Activated B cell treated with CpG ODN at 0.5 μM for 24 hours (primary cell): ENCODE measurements at regions of chr15 and their contacts with region 1.

Region 1: DNA sequence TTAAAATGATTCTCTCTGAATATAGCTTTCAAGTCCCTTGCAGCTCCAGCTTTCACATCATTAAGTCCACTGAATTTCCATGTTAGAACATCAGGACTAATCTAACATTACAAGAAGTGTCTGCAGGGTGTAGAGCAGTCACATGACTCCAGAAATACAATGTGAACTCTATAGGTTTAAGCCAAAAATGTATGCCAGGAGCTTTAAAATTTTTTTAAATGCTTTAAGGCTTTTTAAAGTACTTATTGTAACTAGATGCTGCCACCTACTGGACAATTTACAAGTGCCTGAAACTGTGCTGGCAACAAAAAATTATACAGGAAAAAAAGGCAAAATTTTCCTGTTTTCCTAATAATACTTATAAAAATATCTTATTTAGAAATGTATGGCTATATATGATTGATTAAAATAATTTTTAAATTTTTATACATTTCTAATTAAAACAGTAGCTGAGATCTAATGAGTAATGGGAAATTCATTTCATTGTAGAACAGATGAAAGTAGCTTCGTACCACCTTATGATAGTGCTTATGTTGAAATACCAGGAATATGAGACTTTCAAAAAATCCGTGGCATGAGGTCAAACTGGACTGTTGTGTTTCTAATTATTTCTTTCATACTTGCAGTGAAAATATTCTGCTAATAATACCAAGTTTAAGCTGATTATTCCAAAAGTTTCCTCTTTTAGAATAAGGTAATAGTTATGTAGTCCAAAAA is 25.7 kb downstream of the FSIP1 start:
- DNase-seq: no peak
- ATAC-seq: no peak
- H3K4me3 Mint-ChIP-seq: no peak overlapping the region
- H3K27ac Mint-ChIP-seq: no peak overlapping the region
- H3K4me1 Mint-ChIP-seq: no peaks in the 10 kb centered on the region
- H3K27me3 Mint-ChIP-seq: peaks cover 5% of the 10 kb centered on the region
- CTCF ChIP-seq: peak; percentile 92

Region 2: DNA sequence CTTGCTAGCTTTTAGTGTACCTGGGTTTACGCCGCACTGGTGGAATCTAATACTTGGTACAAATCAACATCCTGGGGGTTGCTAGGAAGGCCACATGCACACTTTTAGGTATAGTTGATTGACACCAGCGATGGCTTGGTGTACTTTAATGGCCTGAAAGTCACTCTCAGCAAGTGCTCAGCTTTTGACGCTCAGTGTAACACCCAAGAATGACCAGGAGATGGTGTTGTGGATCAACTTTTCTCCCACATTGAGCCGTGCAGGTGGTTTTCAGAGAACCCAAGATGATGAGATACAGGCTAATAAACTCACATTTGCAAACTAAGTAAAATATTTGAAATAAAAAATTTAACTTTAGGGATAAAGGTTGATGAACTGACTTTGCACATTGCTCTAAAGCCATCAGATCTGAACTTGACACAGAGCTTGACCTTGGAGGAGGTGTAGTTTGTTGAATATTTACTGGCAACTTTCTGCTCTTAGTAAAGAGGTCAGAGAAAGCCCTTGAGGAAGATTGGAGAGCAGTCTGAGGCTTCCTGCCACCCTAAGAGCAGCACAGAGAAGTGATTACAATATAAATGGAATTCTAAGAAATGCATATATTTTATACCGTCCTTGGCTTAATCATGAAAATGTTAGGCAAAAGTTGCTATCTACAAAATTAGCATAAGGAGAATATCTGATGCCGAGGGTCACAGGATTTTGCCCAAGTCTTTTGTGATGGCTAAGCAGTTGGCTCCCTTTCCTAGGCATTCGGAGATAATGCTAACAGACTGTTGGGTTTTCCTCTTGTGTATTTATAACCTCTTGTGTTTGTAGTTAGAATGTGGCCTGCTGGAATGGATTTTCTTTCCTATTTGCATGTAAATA is 1048.9 kb before region 1 on chr15:
- CTCF ChIA-PET with region 1: interaction called, 10 read pairs
- POLR2A ChIA-PET with region 1: no interaction called
- intact Hi-C with region 1: loop called (anchors 1 kb)
- DNase-seq: no peak
- ATAC-seq: peak; percentile 65
- H3K4me3 Mint-ChIP-seq: no peak overlapping the region
- H3K27ac Mint-ChIP-seq: no peak overlapping the region
- H3K4me1 Mint-ChIP-seq: no peaks in the 10 kb centered on the region
- H3K27me3 Mint-ChIP-seq: peaks cover 14% of the 10 kb centered on the region
- CTCF ChIP-seq: no peak

Region 3: GRCh38 chr15:39624806-39625205 is 132.2 kb before region 1 on chr15:
- CTCF ChIA-PET with region 1: no interaction called
- POLR2A ChIA-PET with region 1: no interaction called
- intact Hi-C with region 1: no loop called
- DNase-seq: no peak
- ATAC-seq: no peak
- H3K4me3 Mint-ChIP-seq: no peak overlapping the region
- H3K27ac Mint-ChIP-seq: no peak overlapping the region
- H3K4me1 Mint-ChIP-seq: peaks cover 4% of the 10 kb centered on the region
- H3K27me3 Mint-ChIP-seq: peaks cover 4% of the 10 kb centered on the region
- CTCF ChIP-seq: no peak

Region 4: DNA sequence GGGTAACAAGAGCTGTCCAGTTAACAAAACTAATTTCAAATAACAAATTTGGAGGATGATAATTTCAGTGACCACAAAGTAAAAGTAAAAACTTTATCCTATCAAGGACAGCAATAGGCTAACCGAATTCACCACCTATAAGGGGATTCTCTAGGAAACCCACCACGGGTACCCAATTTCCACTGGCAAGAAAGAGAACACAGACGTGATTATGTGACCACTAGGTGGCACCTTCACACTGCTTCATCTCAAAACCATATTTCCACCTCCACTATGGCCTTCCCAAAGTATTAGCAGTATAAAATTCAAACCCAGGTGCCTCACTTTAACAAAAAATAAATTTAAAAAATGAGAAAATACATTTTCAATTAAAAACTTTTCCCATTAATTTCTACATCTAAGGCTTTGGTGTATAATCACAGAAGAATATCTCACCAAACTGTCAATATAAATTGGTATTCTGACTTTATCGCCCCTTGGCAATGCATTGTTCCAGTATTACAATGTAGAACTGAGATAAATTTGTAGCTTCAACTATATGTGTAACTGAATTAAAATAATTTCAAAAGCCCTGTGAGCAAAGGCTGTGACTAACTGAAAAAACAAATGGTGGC is 70.9 kb before region 1 on chr15:
- CTCF ChIA-PET with region 1: interaction called, 55 read pairs
- POLR2A ChIA-PET with region 1: no interaction called
- intact Hi-C with region 1: loop called (anchors 1 kb)
- DNase-seq: no peak
- ATAC-seq: no peak
- H3K4me3 Mint-ChIP-seq: no peak overlapping the region
- H3K27ac Mint-ChIP-seq: no peak overlapping the region
- H3K4me1 Mint-ChIP-seq: no peaks in the 10 kb centered on the region
- H3K27me3 Mint-ChIP-seq: no peaks in the 10 kb centered on the region
- CTCF ChIP-seq: no peak

Region 5: GRCh38 chr15:39770748-39771689 is 14.1 kb after region 1 on chr15:
- CTCF ChIA-PET with region 1: interaction called, 13 read pairs
- POLR2A ChIA-PET with region 1: no interaction called
- intact Hi-C with region 1: no loop called
- DNase-seq: no peak
- ATAC-seq: no peak
- H3K4me3 Mint-ChIP-seq: no peak overlapping the region
- H3K27ac Mint-ChIP-seq: no peak overlapping the region
- H3K4me1 Mint-ChIP-seq: peaks cover 9% of the 10 kb centered on the region
- H3K27me3 Mint-ChIP-seq: peaks cover 9% of the 10 kb centered on the region
- CTCF ChIP-seq: no peak